Activated CD8-positive, alpha-beta T cell treated with anti-CD3 and anti-CD28 coated beads, Interleukin-2, amount 10 ng/mL, durations not matched to agents 7 days and 5 days (primary cell): ENCODE measurements at regions of chr11 and their contacts with region 1.

Region 1: DNA sequence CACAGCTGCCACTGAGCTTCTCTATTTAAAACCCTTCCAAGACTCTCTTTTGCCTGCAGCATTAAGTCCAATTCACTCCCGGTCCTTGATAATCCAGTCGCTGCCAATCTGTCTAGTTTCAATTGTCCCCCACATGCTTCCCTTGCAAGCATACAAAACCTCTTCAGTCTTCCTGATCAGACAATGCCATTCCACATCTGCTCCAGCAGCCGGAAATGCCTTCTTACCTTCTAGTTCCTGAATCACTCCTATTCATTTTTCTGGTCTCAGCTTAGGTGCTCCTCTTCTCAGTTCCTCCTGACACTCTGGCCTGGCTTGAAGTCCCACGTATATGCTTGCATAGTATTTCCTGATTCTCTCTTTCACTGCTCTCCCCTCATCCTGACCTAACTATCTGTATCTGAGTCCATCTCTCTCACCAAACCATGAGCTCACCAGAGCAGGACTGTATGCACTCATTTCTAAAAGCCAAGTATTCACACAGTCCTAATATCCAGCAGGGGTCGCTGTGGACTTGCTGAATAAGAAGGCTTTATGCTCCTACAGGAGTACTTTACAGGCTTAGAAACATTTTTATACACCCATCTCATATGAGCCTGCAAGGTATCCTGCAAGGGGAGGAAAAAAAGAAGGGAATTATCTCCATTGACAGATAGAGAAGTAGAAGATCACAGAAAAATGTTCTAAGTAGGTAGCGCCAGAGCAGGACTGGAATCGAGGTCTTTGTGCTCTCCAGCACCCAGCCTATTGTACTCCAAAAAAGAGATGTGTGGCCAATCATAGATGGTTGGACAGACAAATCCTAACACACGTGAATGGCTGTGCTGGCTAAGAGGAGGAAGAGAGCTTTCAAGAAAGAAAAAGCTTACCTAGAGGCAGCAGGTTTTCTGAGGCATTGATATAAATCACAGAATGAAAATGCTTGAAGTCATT is 19.2 kb downstream of the XRRA1 start:
- DNase-seq: peak; percentile 83
- ATAC-seq: peak; percentile 75
- H3K4me3 Mint-ChIP-seq: no peak overlapping the region
- H3K27ac Mint-ChIP-seq: no peak overlapping the region
- H3K4me1 Mint-ChIP-seq: peaks cover 48% of the 10 kb centered on the region
- H3K27me3 Mint-ChIP-seq: no peaks in the 10 kb centered on the region

Region 2: DNA sequence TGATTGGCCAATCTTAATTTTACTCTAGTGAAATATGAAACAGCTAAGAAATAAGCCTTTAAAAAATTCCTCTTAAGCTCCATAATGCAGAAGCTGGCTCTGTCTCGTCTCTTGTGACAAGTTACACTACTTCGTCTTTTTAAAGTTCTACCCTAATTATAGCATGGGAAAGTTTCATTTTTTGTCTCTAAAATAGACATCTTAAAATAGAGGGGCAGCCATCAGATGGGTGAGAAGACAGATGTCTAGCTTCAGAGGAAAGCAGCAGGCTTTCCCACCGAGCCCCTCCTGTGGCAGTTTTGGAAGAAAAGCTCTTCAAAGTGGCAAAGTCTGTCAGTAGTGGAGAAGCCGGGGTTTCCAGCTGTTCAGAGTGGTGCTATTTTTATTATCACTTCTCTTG is 20.3 kb before region 1 on chr11:
- CTCF ChIA-PET with region 1: interaction called, 17 read pairs
- POLR2A ChIA-PET with region 1: interaction called, 3 read pairs
- DNase-seq: no peak
- ATAC-seq: no peak
- H3K4me3 Mint-ChIP-seq: no peak overlapping the region
- H3K27ac Mint-ChIP-seq: no peak overlapping the region
- H3K4me1 Mint-ChIP-seq: peaks cover 4% of the 10 kb centered on the region
- H3K27me3 Mint-ChIP-seq: no peaks in the 10 kb centered on the region

Region 3: DNA sequence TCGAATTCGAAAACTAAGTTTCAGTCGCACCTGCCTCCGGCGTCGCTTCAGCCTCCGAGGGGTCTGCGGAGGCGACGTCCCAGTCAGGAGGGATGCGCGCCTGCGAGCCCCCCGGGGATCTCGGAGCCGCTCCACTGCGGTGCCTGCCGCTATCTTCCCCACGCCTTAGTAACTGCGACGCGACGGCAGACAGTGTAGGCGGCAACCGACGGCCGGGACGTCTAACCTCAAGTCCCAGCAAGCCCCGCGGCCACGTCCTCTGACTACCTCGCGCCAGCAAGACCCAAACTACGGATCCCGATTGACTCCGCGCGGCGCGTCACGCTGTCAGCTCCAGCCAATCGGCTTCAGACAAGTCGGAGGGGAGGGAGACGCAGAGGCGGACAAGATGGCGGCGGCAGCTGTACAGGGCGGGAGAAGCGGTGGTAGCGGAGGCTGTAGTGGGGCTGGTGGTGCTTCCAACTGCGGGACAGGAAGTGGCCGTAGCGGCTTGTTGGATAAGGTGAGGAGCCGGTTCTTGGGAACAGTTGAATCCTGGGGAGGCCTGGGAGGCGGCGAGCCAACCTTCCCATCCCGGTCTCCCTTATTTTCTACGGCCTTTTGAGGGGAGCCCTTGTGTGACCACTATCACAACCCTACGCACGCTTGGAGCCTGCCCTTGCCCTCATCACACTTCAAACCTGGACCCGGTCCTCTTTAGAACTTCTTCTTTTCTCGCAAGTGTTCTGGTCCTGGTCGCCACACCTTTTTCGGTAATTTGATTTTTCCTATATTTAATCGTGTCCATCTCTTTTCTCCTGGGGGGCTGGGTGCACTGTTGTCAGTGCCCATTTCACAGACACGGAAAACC is 19.4 kb after region 1 on chr11 and contains the starts of genes SPCS2 and XRRA1:
- CTCF ChIA-PET with region 1: interaction called, 14 read pairs
- POLR2A ChIA-PET with region 1: interaction called, 7 read pairs
- DNase-seq: peak; percentile 99
- ATAC-seq: peak; percentile 99
- H3K4me3 Mint-ChIP-seq: peak within 1 kb of the TSS; percentile 99
- H3K27ac Mint-ChIP-seq: peak within 1 kb of the TSS; percentile 96
- H3K4me1 Mint-ChIP-seq: peaks cover 32% of the 10 kb centered on the region
- H3K27me3 Mint-ChIP-seq: no peaks in the 10 kb centered on the region
- total RNA-seq, gene SPCS2: 149 to 156 TPM
- total RNA-seq, gene XRRA1: 16.6 to 19.0 TPM

Region 4: GRCh38 chr11:74966651-74967050 is 37.0 kb after region 1 on chr11:
- CTCF ChIA-PET with region 1: interaction called, 14 read pairs
- POLR2A ChIA-PET with region 1: no interaction called
- DNase-seq: no peak
- ATAC-seq: no peak
- H3K4me3 Mint-ChIP-seq: no peak overlapping the region
- H3K27ac Mint-ChIP-seq: no peak overlapping the region
- H3K4me1 Mint-ChIP-seq: peaks cover 10% of the 10 kb centered on the region
- H3K27me3 Mint-ChIP-seq: no peaks in the 10 kb centered on the region

Region 5: DNA sequence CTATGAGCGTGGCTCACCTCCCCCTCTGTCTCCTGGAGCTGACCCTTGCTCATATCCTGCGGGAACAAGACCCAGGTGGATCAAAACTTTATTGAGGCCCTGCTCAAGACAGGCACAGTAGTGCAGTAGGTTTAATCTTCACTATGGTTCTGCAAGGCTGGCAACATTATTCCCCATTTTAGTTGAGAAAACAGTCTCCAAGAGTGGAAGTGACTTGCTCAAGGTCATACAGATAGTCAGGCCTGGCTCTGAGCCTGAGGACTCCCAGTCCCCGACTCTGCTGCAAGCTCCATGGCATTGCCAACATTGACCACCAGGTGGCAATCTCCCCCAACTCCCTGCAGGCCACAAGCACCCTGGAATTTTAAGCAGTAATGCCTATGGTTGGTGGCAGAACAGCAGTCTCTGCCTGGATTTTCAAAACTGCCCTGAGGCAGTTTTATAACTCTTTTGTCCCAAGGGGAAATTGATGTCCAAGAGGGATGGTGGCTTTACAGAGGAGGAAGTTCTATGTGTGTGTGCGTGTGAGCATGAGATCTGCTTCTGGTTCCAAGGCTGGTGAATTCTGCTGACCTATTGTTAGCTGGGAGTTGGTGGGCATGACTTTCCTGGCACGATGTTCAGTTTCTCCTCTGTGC is 93.2 kb after region 1 on chr11:
- CTCF ChIA-PET with region 1: interaction called, 26 read pairs
- POLR2A ChIA-PET with region 1: no interaction called
- DNase-seq: peak; percentile 81
- ATAC-seq: peak; percentile 90
- H3K4me3 Mint-ChIP-seq: no peak overlapping the region
- H3K27ac Mint-ChIP-seq: no peak overlapping the region
- H3K4me1 Mint-ChIP-seq: no peaks in the 10 kb centered on the region
- H3K27me3 Mint-ChIP-seq: no peaks in the 10 kb centered on the region

Region 6: DNA sequence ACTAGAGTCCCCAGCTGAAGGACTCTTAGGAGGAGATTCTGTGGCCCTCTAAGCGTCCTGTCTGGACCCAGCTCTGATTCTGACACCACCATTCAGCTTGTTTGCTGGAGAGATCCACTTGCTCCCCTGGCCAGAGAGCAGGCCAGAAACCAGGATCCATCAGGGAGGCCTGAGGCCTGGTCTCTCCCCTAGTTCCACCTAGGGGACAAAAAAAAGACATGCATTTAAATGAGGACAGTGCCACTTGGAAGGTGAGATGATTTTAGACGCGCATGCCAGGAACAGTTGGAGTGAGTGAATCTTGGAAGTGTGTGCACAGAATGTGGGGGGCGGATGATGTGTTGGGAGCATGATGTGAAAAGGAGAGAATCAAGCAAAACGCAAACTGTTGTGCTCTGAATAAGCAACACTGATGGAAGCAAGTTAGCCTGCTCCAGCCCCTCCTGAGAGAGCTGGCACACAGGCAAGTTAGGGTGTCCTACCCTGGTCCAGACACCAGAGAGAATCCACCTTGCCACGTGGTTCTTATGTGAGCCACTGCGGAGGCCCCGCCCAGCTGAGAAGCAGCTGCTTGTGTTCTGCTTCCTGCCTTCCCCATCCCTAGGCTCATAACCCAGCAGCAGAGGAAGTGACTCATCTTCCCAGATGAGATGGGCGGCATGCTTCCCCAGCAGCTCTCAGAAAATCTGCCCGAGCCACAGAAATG is 213.2 kb after region 1 on chr11:
- CTCF ChIA-PET with region 1: interaction called, 48 read pairs
- POLR2A ChIA-PET with region 1: interaction called, 3 read pairs
- DNase-seq: peak; percentile 86
- ATAC-seq: peak; percentile 86
- H3K4me3 Mint-ChIP-seq: peak overlapping the region; percentile 42
- H3K27ac Mint-ChIP-seq: peak overlapping the region; percentile 89
- H3K4me1 Mint-ChIP-seq: peaks cover 58% of the 10 kb centered on the region
- H3K27me3 Mint-ChIP-seq: peaks cover 22% of the 10 kb centered on the region

Region 7: DNA sequence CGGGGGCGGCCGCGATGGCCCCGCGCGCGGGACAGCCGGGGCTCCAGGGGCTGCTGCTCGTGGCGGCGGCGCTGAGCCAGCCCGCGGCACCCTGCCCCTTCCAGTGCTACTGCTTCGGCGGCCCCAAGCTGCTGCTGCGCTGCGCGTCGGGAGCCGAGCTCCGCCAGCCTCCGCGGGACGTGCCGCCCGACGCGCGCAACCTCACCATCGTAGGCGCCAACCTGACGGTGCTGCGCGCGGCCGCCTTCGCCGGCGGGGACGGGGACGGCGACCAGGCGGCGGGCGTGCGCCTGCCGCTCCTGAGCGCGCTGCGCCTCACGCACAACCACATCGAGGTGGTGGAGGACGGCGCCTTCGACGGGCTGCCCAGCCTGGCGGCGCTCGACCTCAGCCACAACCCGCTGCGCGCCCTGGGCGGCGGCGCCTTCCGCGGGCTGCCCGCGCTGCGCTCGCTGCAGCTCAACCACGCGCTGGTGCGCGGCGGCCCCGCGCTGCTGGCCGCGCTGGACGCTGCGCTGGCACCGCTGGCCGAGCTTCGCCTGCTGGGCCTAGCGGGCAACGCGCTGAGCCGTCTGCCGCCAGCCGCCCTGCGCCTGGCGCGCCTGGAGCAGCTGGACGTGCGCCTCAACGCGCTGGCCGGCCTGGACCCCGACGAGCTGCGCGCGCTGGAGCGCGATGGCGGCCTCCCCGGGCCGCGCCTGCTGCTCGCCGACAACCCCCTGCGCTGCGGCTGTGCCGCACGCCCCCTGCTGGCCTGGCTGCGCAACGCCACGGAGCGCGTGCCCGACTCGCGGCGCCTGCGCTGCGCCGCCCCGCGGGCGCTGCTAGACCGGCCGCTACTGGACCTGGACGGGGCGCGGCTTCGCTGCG is 311.6 kb after region 1 on chr11:
- CTCF ChIA-PET with region 1: interaction called, 28 read pairs
- POLR2A ChIA-PET with region 1: no interaction called
- DNase-seq: peak; percentile 88
- ATAC-seq: peak; percentile 95
- H3K4me3 Mint-ChIP-seq: peak overlapping the region; percentile 70
- H3K27ac Mint-ChIP-seq: no peak overlapping the region
- H3K4me1 Mint-ChIP-seq: peaks cover 9% of the 10 kb centered on the region
- H3K27me3 Mint-ChIP-seq: peaks cover 54% of the 10 kb centered on the region

Region 8: DNA sequence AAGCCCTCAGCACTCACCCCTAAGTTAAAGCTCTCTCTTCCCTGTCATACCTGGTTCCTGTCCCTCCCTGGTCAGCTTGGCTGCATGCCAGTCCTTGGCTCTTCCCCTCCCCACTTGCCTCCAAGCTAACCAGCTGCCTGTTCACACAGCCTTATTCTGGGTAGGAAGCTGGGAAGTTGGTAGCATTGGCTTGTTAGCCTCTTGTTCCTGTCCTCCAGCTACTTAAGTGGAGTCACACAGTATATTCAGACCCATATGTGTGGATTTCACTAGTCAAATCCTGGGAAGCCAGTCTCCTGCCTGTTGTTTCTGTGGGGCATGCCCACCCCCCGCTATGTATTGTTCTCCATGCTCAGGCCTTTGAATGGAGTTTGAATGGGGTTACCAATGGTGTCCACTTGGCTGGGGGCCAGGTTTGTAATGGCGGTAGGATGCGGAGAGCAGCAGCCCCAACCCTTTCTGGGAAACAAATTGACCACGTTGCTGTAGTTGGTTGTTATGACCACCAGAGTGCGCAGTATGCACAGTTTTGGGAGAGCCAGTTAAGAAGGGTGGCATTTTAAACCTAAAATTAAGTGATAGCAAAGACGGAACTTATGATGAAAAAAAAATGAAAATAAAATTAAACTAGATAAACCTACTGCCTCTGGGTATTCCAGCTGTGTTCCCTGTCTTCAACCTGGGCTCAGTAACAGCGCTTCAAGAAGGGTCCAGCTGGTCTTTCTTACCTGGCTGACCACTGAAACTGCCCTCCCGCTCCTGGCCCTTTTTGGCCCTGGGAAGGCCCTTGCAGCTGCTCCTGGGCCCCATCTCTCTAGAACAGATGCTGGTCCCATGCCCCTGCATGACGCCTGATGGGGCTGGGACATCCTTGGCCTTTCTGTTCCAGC is 458.9 kb after region 1 on chr11:
- CTCF ChIA-PET with region 1: no interaction called
- POLR2A ChIA-PET with region 1: no interaction called
- DNase-seq: peak; percentile 83
- ATAC-seq: peak; percentile 83
- H3K4me3 Mint-ChIP-seq: no peak overlapping the region
- H3K27ac Mint-ChIP-seq: no peak overlapping the region
- H3K4me1 Mint-ChIP-seq: peaks cover 12% of the 10 kb centered on the region
- H3K27me3 Mint-ChIP-seq: peaks cover 14% of the 10 kb centered on the region